H1 (cell line): ENCODE measurements at regions of chr1 and their contacts with region 1.

Region 1: DNA sequence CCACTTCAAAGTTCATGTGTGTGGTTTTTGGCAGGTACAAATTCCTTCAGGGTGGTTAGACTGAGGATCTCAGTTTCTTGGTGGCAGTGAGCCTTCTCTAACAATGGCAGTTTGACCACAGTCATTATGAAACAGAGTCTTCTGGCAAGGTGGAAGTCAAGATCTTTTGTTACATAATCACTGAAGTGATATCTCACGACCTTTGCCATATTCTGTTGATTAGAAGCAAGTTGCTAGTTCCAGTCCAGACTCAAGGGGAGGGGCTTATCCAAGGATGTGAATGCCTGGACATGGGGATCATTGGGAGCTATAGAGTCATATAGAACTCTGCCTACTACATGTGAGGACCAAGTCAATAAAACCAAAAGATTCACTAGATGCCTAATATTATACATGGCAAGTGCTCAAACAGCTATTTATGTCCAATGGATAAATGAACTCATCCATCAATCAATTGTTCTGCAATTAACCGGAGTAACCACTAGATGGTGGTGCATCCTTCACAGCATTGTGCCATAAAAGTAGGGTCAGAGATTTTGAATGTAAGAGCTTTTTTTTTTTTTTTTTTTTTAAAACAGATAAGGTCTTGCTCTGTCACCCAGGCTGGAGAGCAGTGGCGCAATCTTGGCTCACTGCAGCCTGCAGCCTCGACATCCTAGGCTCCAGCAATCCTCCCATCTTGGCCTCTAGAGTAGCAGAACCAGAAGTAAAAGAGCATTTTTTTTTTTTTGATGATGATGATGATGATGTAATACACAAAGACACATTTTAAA is 131.9 kb downstream of the CRB1 start:
- DNase-seq: no peak
- H3K4me3 ChIP-seq: no peak overlapping the region
- H3K27ac ChIP-seq: no peak overlapping the region
- H3K4me1 ChIP-seq: no peaks in the 10 kb centered on the region
- H3K27me3 ChIP-seq: no peaks in the 10 kb centered on the region
- CTCF ChIP-seq: peak in 2 of 3 experiments; percentile 56 to 71; a peak in 3 of 4 replicates
- EP300 ChIP-seq: no peak
- POLR2A ChIP-seq: no peak
- RAD21 ChIP-seq: peak; percentile 77

Region 2: GRCh38 chr1:197224160-197224559 is 175.8 kb before region 1 on chr1:
- CTCF ChIA-PET with region 1: no interaction called
- POLR2A ChIA-PET with region 1: no interaction called
- DNase-seq: no peak
- H3K4me3 ChIP-seq: no peak overlapping the region
- H3K27ac ChIP-seq: no peak overlapping the region
- H3K4me1 ChIP-seq: no peaks in the 10 kb centered on the region
- H3K27me3 ChIP-seq: no peaks in the 10 kb centered on the region
- CTCF ChIP-seq: no peak
- EP300 ChIP-seq: no peak
- POLR2A ChIP-seq: no peak
- RAD21 ChIP-seq: no peak

Region 3: GRCh38 chr1:197374428-197374827 is 25.5 kb before region 1 on chr1:
- CTCF ChIA-PET with region 1: no interaction called
- POLR2A ChIA-PET with region 1: no interaction called
- DNase-seq: no peak
- H3K4me3 ChIP-seq: no peak overlapping the region
- H3K27ac ChIP-seq: no peak overlapping the region
- H3K4me1 ChIP-seq: no peaks in the 10 kb centered on the region
- H3K27me3 ChIP-seq: no peaks in the 10 kb centered on the region
- CTCF ChIP-seq: no peak
- EP300 ChIP-seq: no peak
- POLR2A ChIP-seq: no peak
- RAD21 ChIP-seq: no peak

Region 4: DNA sequence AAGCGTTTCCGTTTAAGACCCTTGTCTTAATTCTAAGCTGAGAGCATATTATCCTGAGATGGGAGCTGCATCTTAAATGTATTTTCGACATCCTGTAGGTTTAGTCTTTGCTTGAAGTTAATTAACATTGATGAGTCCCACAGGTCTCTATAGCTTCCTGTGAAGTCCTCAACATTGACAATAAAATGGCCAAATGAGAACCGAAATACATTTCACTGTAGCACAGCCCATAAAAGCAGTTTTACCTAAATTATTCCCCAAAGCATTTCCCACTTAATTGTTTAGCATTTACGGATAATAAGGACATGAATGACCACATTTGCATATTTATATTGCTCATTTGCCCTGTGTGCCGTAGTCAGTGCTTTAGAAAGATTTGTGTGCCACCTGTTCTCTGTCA is 15.5 kb before region 1 on chr1:
- CTCF ChIA-PET with region 1: interaction called, 21 read pairs
- POLR2A ChIA-PET with region 1: no interaction called
- DNase-seq: no peak
- H3K4me3 ChIP-seq: no peak overlapping the region
- H3K27ac ChIP-seq: no peak overlapping the region
- H3K4me1 ChIP-seq: peaks cover 0 to 4% (median 0%) of the 10 kb centered on the region in 4 experiments; a peak in 1 of 7 replicates
- H3K27me3 ChIP-seq: no peaks in the 10 kb centered on the region
- CTCF ChIP-seq: no peak
- EP300 ChIP-seq: no peak
- POLR2A ChIP-seq: no peak
- RAD21 ChIP-seq: no peak

Region 5: GRCh38 chr1:197413564-197413963 is 13.6 kb after region 1 on chr1:
- CTCF ChIA-PET with region 1: interaction called, 16 read pairs
- POLR2A ChIA-PET with region 1: no interaction called
- DNase-seq: no peak
- H3K4me3 ChIP-seq: no peak overlapping the region
- H3K27ac ChIP-seq: no peak overlapping the region
- H3K4me1 ChIP-seq: no peaks in the 10 kb centered on the region
- H3K27me3 ChIP-seq: no peaks in the 10 kb centered on the region
- CTCF ChIP-seq: no peak
- EP300 ChIP-seq: no peak
- POLR2A ChIP-seq: no peak
- RAD21 ChIP-seq: no peak

Region 6: DNA sequence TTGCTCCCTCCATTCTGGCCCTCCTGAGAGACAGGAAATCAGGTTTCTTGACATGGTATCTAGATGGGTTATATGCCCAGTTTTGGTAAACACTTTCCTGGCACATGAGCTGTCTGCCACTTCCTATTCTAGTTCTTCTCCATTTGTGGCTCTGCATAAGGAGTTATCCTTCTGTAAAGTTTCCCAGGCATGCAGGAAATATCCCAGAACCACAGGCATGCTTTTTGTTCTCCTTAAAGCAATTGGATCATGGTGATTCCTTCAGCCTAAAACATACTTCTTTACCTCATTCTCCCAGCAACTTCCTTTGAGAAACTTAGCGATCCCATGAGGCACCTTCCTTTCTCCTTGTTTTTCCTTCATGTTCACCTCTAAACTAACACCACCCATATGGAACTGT is 67.9 kb after region 1 on chr1:
- CTCF ChIA-PET with region 1: interaction called, 10 read pairs
- POLR2A ChIA-PET with region 1: no interaction called
- DNase-seq: no peak
- H3K4me3 ChIP-seq: no peak overlapping the region
- H3K27ac ChIP-seq: no peak overlapping the region
- H3K4me1 ChIP-seq: peaks cover 0 to 16% (median 9%) of the 10 kb centered on the region in 4 experiments; a peak in 6 of 7 replicates
- H3K27me3 ChIP-seq: no peaks in the 10 kb centered on the region
- CTCF ChIP-seq: no peak
- EP300 ChIP-seq: no peak
- POLR2A ChIP-seq: no peak
- RAD21 ChIP-seq: no peak

Region 7: DNA sequence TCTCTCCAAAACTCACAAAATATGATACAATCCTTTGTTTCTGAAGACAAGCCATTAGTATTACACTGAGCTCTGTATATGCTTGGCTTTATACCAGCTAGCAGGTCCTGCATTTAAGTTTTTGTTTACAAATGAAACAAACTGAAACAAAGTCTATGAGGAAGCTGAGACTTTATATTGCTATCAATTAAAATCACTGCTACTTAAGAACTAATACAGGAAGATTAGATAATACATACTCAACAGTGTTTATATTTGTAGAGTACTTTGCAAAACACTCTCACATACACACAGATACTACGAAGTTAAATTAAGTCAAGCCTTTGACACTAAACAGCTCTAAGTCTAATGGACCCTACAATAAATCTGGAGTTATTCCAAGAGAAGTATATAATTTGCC is 115.5 kb after region 1 on chr1:
- CTCF ChIA-PET with region 1: interaction called, 11 read pairs
- POLR2A ChIA-PET with region 1: no interaction called
- DNase-seq: no peak
- H3K4me3 ChIP-seq: no peak overlapping the region
- H3K27ac ChIP-seq: no peak overlapping the region
- H3K4me1 ChIP-seq: no peaks in the 10 kb centered on the region
- H3K27me3 ChIP-seq: no peaks in the 10 kb centered on the region
- CTCF ChIP-seq: no peak
- EP300 ChIP-seq: no peak
- POLR2A ChIP-seq: no peak
- RAD21 ChIP-seq: no peak